Panc1 (cell line): ENCODE measurements at regions of chr12 and their contacts with region 1.

Region 1: DNA sequence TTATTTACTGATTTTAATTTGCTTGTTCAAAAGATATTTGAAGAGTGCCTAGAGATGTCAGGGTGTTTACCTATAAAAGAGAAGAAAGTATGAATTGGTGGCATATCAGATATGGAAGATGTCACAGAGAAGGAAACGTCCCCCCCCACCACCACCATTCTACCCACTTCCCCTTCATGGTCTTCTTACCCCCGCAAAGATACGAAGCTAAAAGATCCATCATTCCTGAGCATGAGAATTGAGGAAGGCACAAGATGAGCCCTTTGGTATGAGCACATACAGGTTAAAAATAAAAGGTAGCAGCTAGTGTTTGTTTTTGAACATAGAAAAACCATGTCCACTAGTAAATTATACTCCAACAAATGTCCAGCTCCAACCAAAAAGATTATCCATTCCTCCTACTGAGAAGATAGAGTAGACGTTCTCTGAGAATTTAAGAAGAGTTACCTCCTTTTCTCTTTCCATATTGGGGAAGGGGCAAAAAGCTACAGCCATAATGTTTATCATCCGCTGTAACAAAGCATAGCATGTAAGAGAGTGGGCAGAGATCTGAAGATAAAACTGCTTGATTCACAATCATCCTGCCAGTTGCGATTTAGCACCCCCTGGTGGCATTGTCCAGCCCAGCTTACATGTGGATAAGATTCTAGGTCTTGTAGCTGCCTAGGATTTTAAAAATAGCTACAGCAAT is 29.1 kb downstream of the NFYB start:
- DNase-seq: peak; percentile 61
- ATAC-seq: peak; percentile 96
- H3K4me3 ChIP-seq: no peak overlapping the region
- H3K27ac ChIP-seq: no peak overlapping the region
- H3K4me1 ChIP-seq: no peaks in the 10 kb centered on the region
- H3K27me3 ChIP-seq: no peaks in the 10 kb centered on the region
- CTCF ChIP-seq: peak; percentile 94

Region 2: DNA sequence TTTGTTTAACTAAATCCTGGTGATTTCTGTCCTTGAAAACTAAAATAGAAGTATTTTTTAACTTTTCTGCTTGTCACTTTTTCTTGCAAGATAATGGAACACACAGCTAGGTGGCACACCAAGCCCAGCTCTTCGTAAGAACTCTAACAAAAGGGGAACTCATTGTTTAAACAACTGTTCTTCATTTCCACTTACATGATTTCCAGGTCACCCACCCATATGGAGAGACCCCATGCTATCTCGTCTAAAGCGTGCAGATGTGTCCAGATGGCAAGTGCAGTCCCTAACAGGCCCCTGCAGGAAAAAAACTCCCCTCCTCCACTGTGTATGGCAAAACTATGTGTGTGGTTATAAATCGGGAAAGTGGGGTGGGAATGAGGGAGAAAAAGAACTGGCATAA is 224.6 kb before region 1 on chr12:
- CTCF ChIA-PET with region 1: interaction called, 4 read pairs
- POLR2A ChIA-PET with region 1: no interaction called
- in situ Hi-C with region 1: no loop called
- intact Hi-C with region 1: loop called (anchors 5 kb)
- DNase-seq: no peak
- ATAC-seq: peak; percentile 63
- H3K4me3 ChIP-seq: no peak overlapping the region
- H3K27ac ChIP-seq: no peak overlapping the region
- H3K4me1 ChIP-seq: no peaks in the 10 kb centered on the region
- H3K27me3 ChIP-seq: no peaks in the 10 kb centered on the region; the same call in 1 of the 2 replicates
- CTCF ChIP-seq: peak; percentile 72

Region 3: DNA sequence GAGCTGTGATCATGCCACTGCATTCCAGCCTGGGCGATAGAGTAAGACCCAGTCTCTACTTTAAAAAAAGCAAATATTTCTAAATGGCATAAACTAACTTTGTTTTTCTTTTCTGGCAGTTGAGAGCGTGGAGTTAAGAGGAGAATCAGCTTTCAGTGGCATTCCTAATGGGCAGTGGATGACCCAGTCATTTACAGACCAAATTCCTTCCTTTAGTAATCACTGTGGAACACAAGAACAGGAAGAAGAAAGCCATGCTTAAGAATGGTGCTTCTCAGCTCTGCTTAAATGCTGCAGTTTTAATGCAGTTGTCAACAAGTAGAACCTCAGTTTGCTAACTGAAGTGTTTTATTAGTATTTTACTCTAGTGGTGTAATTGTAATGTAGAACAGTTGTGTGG is 122.1 kb before region 1 on chr12:
- CTCF ChIA-PET with region 1: no interaction called
- POLR2A ChIA-PET with region 1: interaction called, 12 read pairs
- in situ Hi-C with region 1: no loop called
- intact Hi-C with region 1: no loop called
- DNase-seq: no peak
- ATAC-seq: no peak
- H3K4me3 ChIP-seq: no peak overlapping the region
- H3K27ac ChIP-seq: no peak overlapping the region
- H3K4me1 ChIP-seq: no peaks in the 10 kb centered on the region
- H3K27me3 ChIP-seq: no peaks in the 10 kb centered on the region
- CTCF ChIP-seq: no peak

Region 4: GRCh38 chr12:104057771-104058197 is 51.1 kb before region 1 on chr12:
- CTCF ChIA-PET with region 1: interaction called, 8 read pairs
- POLR2A ChIA-PET with region 1: no interaction called
- in situ Hi-C with region 1: no loop called
- intact Hi-C with region 1: loop called (anchors 2 kb)
- DNase-seq: no peak
- ATAC-seq: peak; percentile 60
- H3K4me3 ChIP-seq: no peak overlapping the region
- H3K27ac ChIP-seq: no peak overlapping the region
- H3K4me1 ChIP-seq: peaks cover 6% of the 10 kb centered on the region; the same call in 1 of the 2 replicates
- H3K27me3 ChIP-seq: no peaks in the 10 kb centered on the region
- CTCF ChIP-seq: peak; percentile 87

Region 5: GRCh38 chr12:104121001-104121400 is 12.1 kb after region 1 on chr12:
- CTCF ChIA-PET with region 1: no interaction called
- POLR2A ChIA-PET with region 1: no interaction called
- in situ Hi-C with region 1: no loop called
- intact Hi-C with region 1: no loop called
- DNase-seq: no peak
- ATAC-seq: peak; percentile 81
- H3K4me3 ChIP-seq: no peak overlapping the region
- H3K27ac ChIP-seq: no peak overlapping the region
- H3K4me1 ChIP-seq: peaks cover 7% of the 10 kb centered on the region; the same call in 1 of the 2 replicates
- H3K27me3 ChIP-seq: no peaks in the 10 kb centered on the region
- CTCF ChIP-seq: no peak

Region 6: DNA sequence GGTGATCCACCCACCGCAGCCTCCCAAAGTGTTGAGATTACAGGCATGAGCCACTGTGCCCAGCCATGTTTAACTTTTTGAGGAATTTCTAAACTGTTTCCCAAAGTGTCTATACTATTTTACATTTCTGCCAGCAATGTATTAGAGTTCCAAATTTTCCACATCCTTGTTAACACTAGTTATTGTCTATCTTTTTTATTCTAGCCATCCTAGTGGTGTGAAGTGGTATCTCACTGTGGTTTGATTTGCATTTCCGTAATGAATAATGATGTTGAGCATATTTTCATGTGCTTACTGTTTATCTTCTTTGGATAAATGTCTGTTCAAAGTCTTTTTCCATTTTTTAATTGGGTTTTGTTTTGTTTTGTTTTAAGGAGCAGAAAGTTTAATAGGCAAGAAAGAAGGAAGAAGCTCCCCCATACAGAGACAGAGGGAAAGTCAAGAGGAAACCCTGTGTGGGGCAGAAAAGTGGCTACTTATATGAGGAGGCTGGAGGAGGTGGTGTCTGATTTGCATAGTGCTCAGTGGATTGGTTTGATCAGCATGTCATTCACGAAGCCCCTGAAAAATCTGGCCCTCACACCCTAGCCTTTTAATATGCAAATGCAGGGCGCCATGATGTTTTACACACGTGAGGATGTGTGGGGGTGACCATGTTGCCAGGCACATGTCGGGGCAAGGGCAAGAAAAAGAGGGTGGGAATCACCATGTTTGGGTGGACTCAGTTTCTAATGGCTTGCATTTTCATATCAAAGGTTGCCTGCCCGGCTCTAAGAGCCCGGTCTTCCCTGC is 121.6 kb after region 1 on chr12:
- CTCF ChIA-PET with region 1: no interaction called
- POLR2A ChIA-PET with region 1: no interaction called
- in situ Hi-C with region 1: no loop called
- intact Hi-C with region 1: no loop called
- DNase-seq: no peak
- ATAC-seq: no peak
- H3K4me3 ChIP-seq: no peak overlapping the region
- H3K27ac ChIP-seq: no peak overlapping the region
- H3K4me1 ChIP-seq: no peaks in the 10 kb centered on the region
- H3K27me3 ChIP-seq: no peaks in the 10 kb centered on the region
- CTCF ChIP-seq: no peak

Region 7: DNA sequence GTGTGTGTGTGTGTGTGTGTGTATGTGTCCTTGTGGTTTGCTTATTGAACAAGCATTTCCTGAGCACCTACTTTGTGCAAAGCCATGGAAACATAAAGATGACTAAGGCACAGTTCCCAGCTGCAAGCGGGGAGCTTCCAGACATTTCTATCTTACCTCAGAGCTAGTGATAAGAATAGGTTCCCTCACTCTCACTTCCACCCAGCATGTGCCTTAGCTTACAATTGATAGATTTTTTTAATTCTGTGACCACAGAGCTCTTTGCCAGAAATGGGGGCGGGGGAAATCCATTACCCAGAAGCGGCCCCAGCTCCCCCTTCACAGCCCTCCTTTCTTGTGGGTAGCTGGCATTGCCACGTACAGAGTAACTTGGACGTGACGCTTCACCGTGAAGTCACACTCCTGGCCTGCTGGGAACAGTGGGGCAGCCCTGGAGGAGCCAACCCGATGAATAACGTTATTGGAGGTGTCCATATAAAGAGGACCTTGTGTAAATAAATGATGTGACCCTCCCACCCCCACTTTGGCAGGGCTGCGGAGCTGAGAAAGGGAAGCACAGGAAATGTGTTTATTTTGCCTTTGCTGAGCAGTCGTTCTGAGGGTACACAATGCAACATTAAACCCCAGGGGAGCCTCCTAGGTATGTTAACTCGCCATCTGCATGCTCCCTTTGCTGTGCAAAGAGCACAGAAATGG is 586.7 kb after region 1 on chr12:
- CTCF ChIA-PET with region 1: interaction called, 17 read pairs
- POLR2A ChIA-PET with region 1: no interaction called
- in situ Hi-C with region 1: no loop called
- intact Hi-C with region 1: no loop called
- DNase-seq: no peak
- ATAC-seq: peak; percentile 56; the same call in 1 of the 2 replicates
- H3K4me3 ChIP-seq: no peak overlapping the region
- H3K27ac ChIP-seq: no peak overlapping the region
- H3K4me1 ChIP-seq: no peaks in the 10 kb centered on the region
- H3K27me3 ChIP-seq: no peaks in the 10 kb centered on the region
- CTCF ChIP-seq: no peak